Activated CD8-positive, alpha-beta T cell treated with anti-CD3 and anti-CD28 coated beads for 36 hours (primary cell): ENCODE measurements at regions of chr10 and their contacts with region 1.

Region 1: DNA sequence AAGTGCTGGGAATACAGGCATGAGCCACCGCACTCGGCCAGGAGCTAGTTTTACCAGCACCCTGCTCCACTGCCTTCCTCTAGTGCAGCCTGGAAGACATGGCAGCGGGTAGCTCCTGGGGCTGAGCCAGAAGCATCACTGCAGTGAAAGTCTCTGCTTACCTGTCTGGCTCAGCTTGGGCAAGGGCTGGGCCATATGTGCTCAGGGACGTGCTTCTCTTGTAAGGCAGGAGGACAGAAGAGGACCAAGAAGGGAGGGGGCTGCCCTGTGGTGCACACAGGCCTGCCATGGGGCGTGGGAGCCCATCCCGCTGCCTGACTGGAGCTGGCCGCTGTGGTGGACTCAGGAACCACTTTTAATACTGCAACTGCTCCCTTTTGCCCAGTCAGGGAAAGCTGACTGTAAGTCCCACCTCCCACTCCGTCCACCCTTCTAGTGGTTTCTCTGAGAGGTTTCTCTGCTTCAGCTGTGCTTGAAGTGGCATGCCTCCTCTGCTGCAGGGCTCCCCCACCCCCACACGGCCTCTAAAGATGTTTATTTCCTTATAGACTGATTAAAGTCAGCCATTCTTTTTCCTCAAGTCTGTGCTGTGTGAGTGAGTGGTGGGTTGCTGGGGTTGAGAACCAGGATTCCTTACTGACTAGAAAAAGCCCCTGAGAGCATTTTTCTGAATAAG is 25.3 kb upstream of the C10orf95 start:
- DNase-seq: peak; percentile 35
- ATAC-seq: no peak
- H3K4me3 Mint-ChIP-seq: no peak overlapping the region
- H3K27ac Mint-ChIP-seq: peak overlapping the region; percentile 77
- H3K4me1 Mint-ChIP-seq: peaks cover 29% of the 10 kb centered on the region
- H3K27me3 Mint-ChIP-seq: no peaks in the 10 kb centered on the region
- CTCF ChIP-seq: no peak

Region 2: DNA sequence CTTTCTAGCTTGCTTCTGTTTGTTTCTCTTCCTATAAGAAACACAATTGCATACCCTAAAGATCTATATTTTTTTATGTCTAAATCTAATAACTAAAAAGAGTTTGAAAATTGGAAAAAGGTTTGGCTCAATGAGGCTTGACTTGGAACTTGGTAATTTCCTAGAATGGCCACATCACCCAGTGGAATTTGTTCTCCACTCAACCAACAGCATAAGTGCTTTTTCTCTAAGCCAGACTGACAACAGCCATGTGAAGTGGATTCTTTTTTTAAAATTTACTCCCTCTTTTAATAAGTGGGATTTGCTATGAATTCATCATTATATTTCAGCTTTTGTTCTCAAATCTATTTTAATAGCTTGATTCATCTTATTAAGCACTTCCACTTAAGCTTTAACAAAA is 197.5 kb before region 1 on chr10:
- CTCF ChIA-PET with region 1: no interaction called
- POLR2A ChIA-PET with region 1: no interaction called
- intact Hi-C with region 1: no loop called
- DNase-seq: no peak
- ATAC-seq: no peak
- H3K4me3 Mint-ChIP-seq: no peak overlapping the region
- H3K27ac Mint-ChIP-seq: no peak overlapping the region
- H3K4me1 Mint-ChIP-seq: peaks cover 38% of the 10 kb centered on the region
- H3K27me3 Mint-ChIP-seq: no peaks in the 10 kb centered on the region
- CTCF ChIP-seq: no peak

Region 3: DNA sequence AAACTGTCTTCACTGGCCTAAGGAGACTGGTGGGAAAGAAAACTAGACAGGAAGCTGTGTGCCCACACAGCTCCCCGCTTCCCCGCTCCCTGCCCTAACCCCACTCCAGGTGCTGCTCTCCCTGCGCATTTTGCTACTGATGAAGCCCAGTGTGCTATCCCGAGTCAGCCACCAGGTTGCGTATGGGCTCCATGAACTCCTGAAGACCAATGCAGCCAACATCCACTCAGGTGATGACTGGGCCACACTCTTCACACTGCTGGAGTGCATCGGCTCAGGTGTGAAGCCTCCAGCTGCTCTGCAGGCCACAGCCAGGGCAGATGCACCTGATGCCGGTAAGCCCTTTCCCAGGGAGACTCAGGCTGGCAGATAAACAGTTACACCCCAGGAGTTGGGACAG is 101.4 kb before region 1 on chr10:
- CTCF ChIA-PET with region 1: no interaction called
- POLR2A ChIA-PET with region 1: no interaction called
- intact Hi-C with region 1: no loop called
- DNase-seq: no peak
- ATAC-seq: no peak
- H3K4me3 Mint-ChIP-seq: no peak overlapping the region
- H3K27ac Mint-ChIP-seq: no peak overlapping the region
- H3K4me1 Mint-ChIP-seq: no peaks in the 10 kb centered on the region
- H3K27me3 Mint-ChIP-seq: no peaks in the 10 kb centered on the region
- CTCF ChIP-seq: no peak

Region 4: DNA sequence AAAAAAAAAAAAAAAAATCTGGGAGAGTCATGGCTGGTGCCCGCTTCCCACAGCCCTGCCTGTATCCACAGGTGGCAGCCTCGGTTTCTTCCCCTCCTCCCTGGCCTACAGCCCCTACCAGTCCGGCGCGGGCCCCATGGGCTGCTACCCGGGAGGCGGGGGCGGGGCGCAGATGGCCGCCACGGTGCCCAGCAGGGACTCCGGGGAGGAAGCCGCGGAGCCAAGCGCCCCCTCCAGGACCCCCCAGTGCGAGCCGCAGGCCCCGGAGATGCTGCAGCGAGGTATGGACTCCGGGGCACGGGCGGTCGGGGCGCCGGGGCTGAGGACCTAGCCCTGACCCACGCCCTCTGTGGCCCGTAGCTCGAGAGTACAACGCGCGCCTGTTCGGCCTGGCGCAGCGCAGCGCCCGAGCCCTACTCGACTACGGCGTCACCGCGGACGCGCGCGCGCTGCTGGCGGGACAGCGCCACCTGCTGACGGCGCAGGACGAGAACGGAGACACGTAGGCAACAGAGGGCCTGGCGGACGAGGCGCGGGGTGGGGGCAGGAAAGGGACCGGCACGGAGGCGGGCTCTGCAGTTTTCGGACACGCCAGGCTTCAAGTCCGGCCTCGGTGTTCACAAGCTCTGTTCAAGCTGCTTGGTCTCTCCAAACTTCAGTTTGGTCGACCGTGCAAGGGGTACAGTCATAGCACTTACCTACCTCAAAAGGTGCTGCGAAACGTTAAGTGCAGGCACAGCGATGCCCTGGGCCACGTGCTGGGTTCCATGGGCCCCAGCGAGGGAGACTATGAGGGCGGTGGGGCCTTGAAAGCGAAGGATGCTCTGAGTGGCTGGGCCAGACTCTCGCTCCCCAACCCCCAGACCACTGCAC is 77.2 kb before region 1 on chr10:
- CTCF ChIA-PET with region 1: interaction called, 28 read pairs
- POLR2A ChIA-PET with region 1: interaction called, 14 read pairs
- intact Hi-C with region 1: loop called (anchors 2 kb)
- DNase-seq: peak; percentile 92
- ATAC-seq: peak; percentile 58
- H3K4me3 Mint-ChIP-seq: peak overlapping the region; percentile 93
- H3K27ac Mint-ChIP-seq: peak overlapping the region; percentile 86
- H3K4me1 Mint-ChIP-seq: peaks cover 47% of the 10 kb centered on the region
- H3K27me3 Mint-ChIP-seq: no peaks in the 10 kb centered on the region
- CTCF ChIP-seq: peak; percentile 98

Region 5: DNA sequence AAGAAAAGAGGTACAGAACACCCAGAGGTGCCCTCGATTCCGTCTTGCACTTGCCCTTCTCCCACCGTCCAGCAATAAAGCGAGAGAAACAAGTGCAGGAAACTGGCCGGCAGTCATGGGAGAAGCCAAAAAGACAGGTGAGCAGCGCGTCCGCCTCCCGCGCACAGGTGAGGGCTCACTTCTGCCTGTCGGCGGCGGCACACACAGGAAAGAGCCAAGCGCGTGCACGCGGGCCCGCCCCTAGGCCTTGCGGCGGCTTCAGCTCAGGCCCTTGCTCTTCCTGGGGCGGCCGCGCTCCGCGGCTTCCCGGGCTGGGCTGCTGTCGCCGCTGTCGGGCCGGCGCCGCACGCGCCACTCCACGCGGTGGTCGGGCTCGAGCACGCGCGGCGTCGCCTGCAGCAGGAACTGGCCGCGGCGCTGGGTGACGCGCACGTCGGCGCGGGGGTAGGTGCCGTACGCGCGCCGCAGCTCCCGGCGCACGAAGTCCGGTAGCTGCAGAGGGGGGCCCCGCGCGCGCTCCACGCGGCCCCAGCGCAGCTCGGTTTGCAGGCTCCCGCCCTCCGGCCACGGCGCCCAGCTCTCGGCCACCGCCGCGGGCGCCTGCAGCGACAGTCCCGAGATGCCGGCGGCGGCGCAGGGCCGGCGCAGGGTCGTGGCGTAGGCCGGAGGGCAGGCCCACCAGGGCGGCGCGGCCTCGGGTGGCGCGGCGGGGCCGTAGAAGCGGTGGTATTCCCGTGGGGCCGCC is 26.2 kb before region 1 on chr10:
- CTCF ChIA-PET with region 1: interaction called, 32 read pairs
- POLR2A ChIA-PET with region 1: interaction called, 7 read pairs
- intact Hi-C with region 1: no loop called
- DNase-seq: peak; percentile 87
- ATAC-seq: peak; percentile 60
- H3K4me3 Mint-ChIP-seq: peak overlapping the region; percentile 96
- H3K27ac Mint-ChIP-seq: peak overlapping the region; percentile 94
- H3K4me1 Mint-ChIP-seq: peaks cover 26% of the 10 kb centered on the region
- H3K27me3 Mint-ChIP-seq: no peaks in the 10 kb centered on the region
- CTCF ChIP-seq: no peak

Region 6: DNA sequence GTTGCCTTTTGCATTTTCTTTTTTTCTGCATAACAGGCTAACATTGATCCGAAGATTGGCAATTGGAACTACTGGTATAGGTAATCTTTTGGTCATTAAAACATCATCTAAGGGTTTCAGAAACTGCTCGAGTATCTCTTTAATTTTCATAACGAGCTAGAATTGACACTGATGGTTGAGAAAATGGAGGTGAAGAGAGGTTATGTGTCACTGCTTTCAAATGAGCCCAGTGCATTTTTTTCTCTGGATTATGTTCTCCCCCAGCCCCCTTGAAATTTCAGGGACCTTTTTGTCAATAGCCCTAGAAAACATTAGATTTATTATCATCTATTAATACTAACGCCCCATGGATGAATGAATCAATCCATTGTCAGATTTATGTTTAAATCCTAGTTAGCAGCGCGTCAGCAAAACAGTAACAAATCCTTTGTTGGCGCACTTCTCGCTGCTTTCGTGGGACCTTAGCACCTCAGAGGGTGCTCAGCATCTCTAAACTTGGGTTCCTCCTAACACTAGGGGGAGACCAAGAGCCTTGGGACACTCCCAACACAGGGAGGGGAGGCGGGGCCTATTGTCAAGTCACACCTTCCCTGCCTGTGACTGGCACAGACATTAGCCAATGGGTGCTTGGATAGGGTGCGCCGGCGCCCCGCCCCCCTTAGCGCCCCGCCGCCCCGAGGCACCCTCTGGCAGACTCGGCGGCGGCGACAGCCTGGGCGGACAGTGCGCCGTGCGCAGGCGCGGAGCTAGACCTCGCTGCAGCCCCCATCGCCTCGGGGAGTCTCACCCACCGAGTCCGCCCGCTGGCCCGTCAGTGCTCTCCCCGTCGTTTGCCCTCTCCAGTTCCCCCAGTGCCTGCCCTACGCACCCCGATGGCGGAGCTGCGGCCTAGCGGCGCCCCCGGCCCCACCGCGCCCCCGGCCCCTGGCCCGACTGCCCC is 26.9 kb after region 1 on chr10 and contains the start of gene SUFU:
- CTCF ChIA-PET with region 1: interaction called, 19 read pairs
- POLR2A ChIA-PET with region 1: interaction called, 4 read pairs
- intact Hi-C with region 1: no loop called
- DNase-seq: peak; percentile 99
- ATAC-seq: peak; percentile 78
- H3K4me3 Mint-ChIP-seq: no peak within 1 kb of the TSS
- H3K27ac Mint-ChIP-seq: peak within 1 kb of the TSS; percentile 84
- H3K4me1 Mint-ChIP-seq: peaks cover 26% of the 10 kb centered on the region
- H3K27me3 Mint-ChIP-seq: no peaks in the 10 kb centered on the region
- CTCF ChIP-seq: peak; percentile 82
- total RNA-seq, gene SUFU: 8.5 to 8.8 TPM

Region 7: GRCh38 chr10:102726274-102726673 is 249.7 kb after region 1 on chr10:
- CTCF ChIA-PET with region 1: no interaction called
- POLR2A ChIA-PET with region 1: no interaction called
- intact Hi-C with region 1: no loop called
- DNase-seq: no peak
- ATAC-seq: no peak
- H3K4me3 Mint-ChIP-seq: no peak overlapping the region
- H3K27ac Mint-ChIP-seq: no peak overlapping the region
- H3K4me1 Mint-ChIP-seq: peaks cover 18% of the 10 kb centered on the region
- H3K27me3 Mint-ChIP-seq: no peaks in the 10 kb centered on the region
- CTCF ChIP-seq: no peak